ENCODE measurements at regions of chr19 and their contacts with region 1.

Region 1: DNA sequence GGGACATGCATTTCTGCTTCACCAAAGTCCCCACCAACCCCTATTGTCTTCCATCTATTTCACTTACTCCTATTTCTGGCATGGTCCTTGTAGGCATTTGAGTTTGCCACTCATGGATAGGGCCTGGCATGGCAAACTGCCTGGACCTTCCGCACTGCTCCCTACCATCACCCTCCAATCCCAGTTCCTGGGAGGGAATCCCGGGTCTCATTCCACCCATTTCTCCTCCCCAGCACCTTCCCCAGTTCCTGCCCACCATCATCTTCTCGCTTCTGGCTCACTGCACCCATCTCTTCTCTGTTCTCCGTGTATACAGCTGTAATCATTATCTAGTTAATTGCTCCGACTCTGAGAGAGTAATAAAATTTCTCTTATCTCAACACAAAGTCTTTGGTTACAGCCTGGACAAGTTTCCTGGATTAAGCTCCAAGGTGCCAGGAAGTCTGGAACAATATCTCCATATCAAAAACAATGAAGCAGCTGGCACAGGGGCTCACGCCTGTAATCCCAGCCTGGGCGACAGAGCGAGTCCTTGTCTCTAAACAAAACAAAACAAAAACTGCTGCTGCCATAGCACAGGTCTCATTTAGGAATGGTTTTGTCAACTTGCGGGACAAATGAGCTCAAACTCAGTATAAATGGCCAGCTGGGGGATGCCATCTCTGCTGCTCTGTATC is 17.0 kb upstream of the COX7A1 start:
- DNase-seq: no peak
- ATAC-seq: no peak
- H3K4me3 Mint-ChIP-seq: no peak overlapping the region
- H3K27ac Mint-ChIP-seq: no peak overlapping the region
- H3K4me1 Mint-ChIP-seq: peaks cover 3% of the 10 kb centered on the region
- H3K27me3 Mint-ChIP-seq: no peaks in the 10 kb centered on the region
- CTCF ChIP-seq: no peak

Region 2: GRCh38 chr19:36060430-36060829 is 108.8 kb before region 1 on chr19:
- CTCF ChIA-PET with region 1: interaction called, 10 read pairs
- POLR2A ChIA-PET with region 1: no interaction called
- intact Hi-C with region 1: loop called (anchors 1 kb)
- DNase-seq: no peak
- ATAC-seq: no peak
- H3K4me3 Mint-ChIP-seq: no peak overlapping the region
- H3K27ac Mint-ChIP-seq: no peak overlapping the region
- H3K4me1 Mint-ChIP-seq: peaks cover 6% of the 10 kb centered on the region
- H3K27me3 Mint-ChIP-seq: no peaks in the 10 kb centered on the region
- CTCF ChIP-seq: no peak

Region 3: GRCh38 chr19:36132489-36132891 is 36.7 kb before region 1 on chr19:
- CTCF ChIA-PET with region 1: interaction called, 68 read pairs
- POLR2A ChIA-PET with region 1: interaction called, 15 read pairs
- intact Hi-C with region 1: loop called (anchors 1 kb)
- DNase-seq: no peak
- ATAC-seq: no peak
- H3K4me3 Mint-ChIP-seq: no peak overlapping the region
- H3K27ac Mint-ChIP-seq: no peak overlapping the region
- H3K4me1 Mint-ChIP-seq: peaks cover 18% of the 10 kb centered on the region
- H3K27me3 Mint-ChIP-seq: peaks cover 2% of the 10 kb centered on the region
- CTCF ChIP-seq: no peak

Region 4: DNA sequence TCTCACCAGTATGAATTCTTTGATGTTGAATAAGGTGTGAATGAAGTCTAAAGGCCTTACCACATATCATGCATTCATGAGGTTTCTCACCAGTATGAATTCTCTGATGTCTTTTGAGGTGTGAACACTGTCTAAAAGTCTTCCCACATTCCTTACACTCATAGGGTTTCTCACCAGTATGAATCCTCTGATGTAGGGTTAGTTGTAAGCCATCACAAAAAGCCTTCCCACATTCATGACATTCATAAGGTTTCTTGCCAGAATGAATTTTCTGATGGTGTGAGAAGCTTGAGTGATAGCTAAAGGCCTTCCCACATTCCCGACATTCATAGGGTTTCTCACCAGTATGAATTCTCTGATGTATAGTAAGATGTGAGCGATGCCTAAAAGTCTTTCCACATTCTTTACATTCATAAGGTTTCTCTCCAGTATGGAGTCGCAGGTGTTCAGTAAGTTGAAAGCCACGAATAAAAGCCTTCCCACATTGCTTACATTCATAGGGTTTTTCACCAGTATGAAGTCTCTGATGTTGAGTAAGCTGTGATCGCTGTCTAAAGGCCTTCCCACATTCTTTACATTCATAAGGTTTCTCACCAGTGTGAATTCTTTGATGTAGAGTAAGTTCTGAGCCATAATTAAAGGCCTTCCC is 469.8 kb after region 1 on chr19:
- CTCF ChIA-PET with region 1: no interaction called
- POLR2A ChIA-PET with region 1: no interaction called
- intact Hi-C with region 1: no loop called
- DNase-seq: no peak
- ATAC-seq: no peak
- H3K4me3 Mint-ChIP-seq: no peak overlapping the region
- H3K27ac Mint-ChIP-seq: no peak overlapping the region
- H3K4me1 Mint-ChIP-seq: no peaks in the 10 kb centered on the region
- H3K27me3 Mint-ChIP-seq: no peaks in the 10 kb centered on the region
- CTCF ChIP-seq: no peak

Measured in activated B cell treated with CpG ODN at 0.5 μM for 24 hours (primary cell).